WTC11 (cell line): ENCODE measurements at regions of chr6 and their contacts with region 1.

Region 1: DNA sequence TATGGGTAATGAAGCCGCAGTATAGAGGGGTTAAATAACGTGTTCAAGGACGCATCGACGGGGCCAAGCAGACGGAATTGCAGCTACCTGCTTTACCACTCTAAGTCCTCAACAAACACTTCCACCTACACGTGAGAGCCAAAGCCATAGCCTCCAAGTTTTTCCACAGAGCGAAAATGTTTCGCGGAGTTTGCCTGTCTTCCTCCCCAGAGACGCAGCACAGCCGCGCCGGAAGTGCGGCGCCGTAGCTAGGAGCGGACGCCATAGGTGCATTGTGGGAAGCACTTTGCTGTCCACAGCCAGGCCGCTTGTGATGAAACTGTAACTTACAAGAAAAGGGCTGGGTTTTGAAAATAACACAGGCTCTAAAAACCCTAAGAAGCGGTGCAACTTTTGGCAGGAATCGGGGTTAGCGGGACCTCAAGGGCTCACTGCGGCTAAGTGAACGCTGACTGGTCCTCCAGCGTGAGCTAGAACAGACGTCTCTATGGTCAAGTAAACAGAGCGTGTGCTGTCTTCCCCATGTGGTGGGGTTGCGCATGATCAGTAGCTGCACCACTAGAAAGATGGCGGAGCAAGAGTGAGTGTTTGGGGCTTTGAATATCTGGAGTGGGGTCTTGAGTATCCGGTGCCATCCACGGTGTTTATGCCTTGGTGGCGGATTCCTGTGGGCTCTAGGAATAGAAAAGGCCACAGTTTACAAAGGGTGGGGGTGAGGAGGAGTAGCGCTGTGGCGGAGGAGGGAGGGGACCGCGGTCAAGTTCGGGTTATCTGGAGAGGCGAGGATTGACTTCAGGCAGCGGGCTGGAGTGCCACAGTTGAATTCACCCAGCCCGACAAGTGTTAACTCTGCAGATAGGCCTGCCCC is at the start of gene RPL7L1:
- DNase-seq: peak; percentile 70
- ATAC-seq: peak; percentile 92
- H3K4me3 Mint-ChIP-seq: peak within 1 kb of the TSS; percentile 100
- H3K27ac Mint-ChIP-seq: peak within 1 kb of the TSS; percentile 100
- H3K4me1 Mint-ChIP-seq: peaks cover 8% of the 10 kb centered on the region; the same call in 1 of the 2 replicates
- H3K27me3 Mint-ChIP-seq: no peaks in the 10 kb centered on the region
- CTCF ChIP-seq: no peak
- total RNA-seq, gene RPL7L1: 91.4 to 107 TPM (median 93.0 TPM) in 3 replicates

Region 2: GRCh38 chr6:42726485-42727086 is 153.0 kb before region 1 on chr6:
- CTCF ChIA-PET with region 1: interaction called, 11 read pairs
- POLR2A ChIA-PET with region 1: interaction called, 3 read pairs
- DNase-seq: peak; percentile 58
- ATAC-seq: peak; percentile 93
- H3K4me3 Mint-ChIP-seq: no peak overlapping the region
- H3K27ac Mint-ChIP-seq: peak overlapping the region; percentile 25; the same call in 1 of the 2 replicates
- H3K4me1 Mint-ChIP-seq: peaks cover 9% of the 10 kb centered on the region
- H3K27me3 Mint-ChIP-seq: no peaks in the 10 kb centered on the region; the same call in 1 of the 2 replicates
- CTCF ChIP-seq: peak; percentile 88

Region 3: GRCh38 chr6:42890311-42891198 is 10.9 kb after region 1 on chr6:
- CTCF ChIA-PET with region 1: no interaction called
- POLR2A ChIA-PET with region 1: interaction called, 19 read pairs
- DNase-seq: peak; percentile 93
- ATAC-seq: peak; percentile 90
- H3K4me3 Mint-ChIP-seq: peak overlapping the region; percentile 87
- H3K27ac Mint-ChIP-seq: peak overlapping the region; percentile 97
- H3K4me1 Mint-ChIP-seq: peaks cover 13% of the 10 kb centered on the region
- H3K27me3 Mint-ChIP-seq: no peaks in the 10 kb centered on the region
- CTCF ChIP-seq: no peak

Region 4: DNA sequence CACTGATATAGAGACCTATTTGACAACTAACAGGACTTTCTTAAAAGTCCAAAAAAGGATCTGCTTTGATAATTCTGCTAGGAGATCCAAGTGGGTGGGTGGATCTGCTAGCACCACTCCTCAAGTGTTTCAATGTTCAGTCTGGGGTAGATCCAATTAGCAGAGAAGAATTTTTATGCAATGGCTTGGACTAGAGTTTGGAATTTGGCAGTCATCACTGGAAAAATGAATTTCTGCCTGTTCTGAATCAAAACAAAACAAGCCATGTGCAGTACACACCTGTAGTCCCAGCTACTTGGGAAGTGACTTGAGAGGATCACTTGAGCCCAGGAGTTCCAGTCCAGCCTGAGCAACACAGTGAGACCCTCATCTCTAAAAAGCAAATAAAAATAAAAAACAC is 68.3 kb after region 1 on chr6:
- CTCF ChIA-PET with region 1: no interaction called
- POLR2A ChIA-PET with region 1: no interaction called
- DNase-seq: no peak
- ATAC-seq: no peak
- H3K4me3 Mint-ChIP-seq: no peak overlapping the region
- H3K27ac Mint-ChIP-seq: peak overlapping the region; percentile 15; the same call in 1 of the 2 replicates
- H3K4me1 Mint-ChIP-seq: peaks cover 9% of the 10 kb centered on the region
- H3K27me3 Mint-ChIP-seq: no peaks in the 10 kb centered on the region
- CTCF ChIP-seq: no peak